Activated CD4-positive, alpha-beta memory T cell treated with anti-CD3 and anti-CD28 coated beads for 36 hours (primary cell): ENCODE measurements at regions of chr13 and their contacts with region 1.

Region 1: GRCh38 chr13:99542788-99543406 is 41.6 kb downstream of the TM9SF2 start:
- DNase-seq: peak; percentile 78
- H3K4me3 Mint-ChIP-seq: no peak overlapping the region
- H3K27ac Mint-ChIP-seq: peak overlapping the region; percentile 24
- H3K4me1 Mint-ChIP-seq: peaks cover 51% of the 10 kb centered on the region
- H3K27me3 Mint-ChIP-seq: no peaks in the 10 kb centered on the region

Region 2: DNA sequence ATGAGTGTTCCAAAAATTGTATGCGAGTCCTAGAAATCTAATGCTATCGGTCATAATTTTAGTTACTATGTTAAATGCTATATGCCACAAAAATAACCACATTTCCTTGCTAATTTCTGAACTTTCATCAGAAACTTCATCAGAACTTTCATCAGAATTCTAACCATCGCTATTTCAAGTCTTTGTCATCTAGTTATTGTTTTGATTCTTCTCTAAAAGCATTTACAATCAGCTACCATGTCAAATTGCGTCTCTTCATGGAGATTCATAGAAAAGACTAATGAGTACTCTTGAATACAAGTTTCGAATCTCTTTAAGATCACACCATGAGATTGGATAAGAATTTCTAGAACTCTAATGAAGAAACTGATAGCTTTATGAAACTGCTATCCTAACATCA is 94.4 kb before region 1 on chr13:
- CTCF ChIA-PET with region 1: interaction called, 3 read pairs
- POLR2A ChIA-PET with region 1: no interaction called
- intact Hi-C with region 1: loop called (anchors 2 kb)
- DNase-seq: no peak
- H3K4me3 Mint-ChIP-seq: no peak overlapping the region
- H3K27ac Mint-ChIP-seq: peak overlapping the region; percentile 42
- H3K4me1 Mint-ChIP-seq: peaks cover 30% of the 10 kb centered on the region
- H3K27me3 Mint-ChIP-seq: peaks cover 17% of the 10 kb centered on the region

Region 3: GRCh38 chr13:99606324-99607066 is 63.6 kb after region 1 on chr13:
- CTCF ChIA-PET with region 1: interaction called, 3 read pairs
- POLR2A ChIA-PET with region 1: no interaction called
- intact Hi-C with region 1: loop called (anchors 5 kb)
- DNase-seq: peak; percentile 93
- H3K4me3 Mint-ChIP-seq: peak within 1 kb of the TSS; percentile 85
- H3K27ac Mint-ChIP-seq: peak within 1 kb of the TSS; percentile 72
- H3K4me1 Mint-ChIP-seq: peaks cover 33% of the 10 kb centered on the region
- H3K27me3 Mint-ChIP-seq: no peaks in the 10 kb centered on the region

Region 4: GRCh38 chr13:99702687-99703319 is 159.9 kb after region 1 on chr13:
- CTCF ChIA-PET with region 1: no interaction called
- POLR2A ChIA-PET with region 1: no interaction called
- intact Hi-C with region 1: no loop called
- DNase-seq: no peak
- H3K4me3 Mint-ChIP-seq: no peak overlapping the region
- H3K27ac Mint-ChIP-seq: no peak overlapping the region
- H3K4me1 Mint-ChIP-seq: peaks cover 4% of the 10 kb centered on the region
- H3K27me3 Mint-ChIP-seq: no peaks in the 10 kb centered on the region